Ascending aorta (tissue), 2 donors: ENCODE measurements at regions of chr3 and their contacts with region 1.

Region 1: DNA sequence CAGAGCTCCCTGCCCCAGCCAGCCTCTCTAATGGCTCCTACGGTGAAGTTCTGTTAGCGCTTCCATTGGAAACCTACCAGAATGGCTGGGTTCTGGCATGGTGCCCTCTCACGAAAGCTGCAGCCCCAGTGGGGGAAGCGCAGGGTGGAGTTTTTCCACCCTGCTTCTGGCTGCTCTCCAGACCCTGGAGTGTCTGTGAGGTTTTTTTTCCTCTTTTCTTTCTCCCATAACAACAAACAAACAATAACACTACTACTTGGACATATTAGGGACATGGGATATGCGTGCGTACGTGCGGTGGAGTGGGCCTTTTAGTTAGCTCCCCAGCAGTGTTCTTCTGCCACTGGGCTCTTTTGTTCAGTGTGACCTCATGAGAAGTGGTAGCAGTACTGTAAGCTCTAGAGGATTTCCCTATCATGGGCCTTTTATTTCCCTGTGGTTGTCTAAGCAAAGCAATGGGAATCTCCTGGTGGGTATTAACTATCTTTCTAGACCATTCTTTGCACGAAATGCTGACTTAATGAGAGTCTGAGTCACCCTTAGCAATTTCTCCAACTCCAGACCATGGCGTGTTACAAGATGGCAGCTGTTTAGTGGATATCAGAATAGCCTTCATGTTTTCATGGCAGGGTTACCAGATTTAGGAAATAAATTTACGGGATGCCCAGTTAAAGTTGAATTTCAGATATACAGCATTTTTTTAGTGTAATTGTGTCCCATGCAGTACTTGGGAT is 161.9 kb downstream of the FNDC3B start:
- DNase-seq: peak; percentile 12 to 72
- H3K4me3 ChIP-seq: no peak overlapping the region
- H3K27ac ChIP-seq: peak overlapping the region; percentile 75 to 88
- H3K4me1 ChIP-seq: peaks cover 11 to 46% of the 10 kb centered on the region in 2 donors
- H3K27me3 ChIP-seq: no peaks in the 10 kb centered on the region
- CTCF ChIP-seq: no peak

Region 2: GRCh38 chr3:171838218-171838761 is 363.0 kb before region 1 on chr3:
- intact Hi-C with region 1: no loop called
- DNase-seq: peak in 1 of 2 donors; percentile 69
- H3K4me3 ChIP-seq: peak overlapping the region; percentile 1 to 40
- H3K27ac ChIP-seq: peak overlapping the region; percentile 31 to 47
- H3K4me1 ChIP-seq: no peaks in the 10 kb centered on the region
- H3K27me3 ChIP-seq: no peaks in the 10 kb centered on the region
- CTCF ChIP-seq: no peak

Region 3: DNA sequence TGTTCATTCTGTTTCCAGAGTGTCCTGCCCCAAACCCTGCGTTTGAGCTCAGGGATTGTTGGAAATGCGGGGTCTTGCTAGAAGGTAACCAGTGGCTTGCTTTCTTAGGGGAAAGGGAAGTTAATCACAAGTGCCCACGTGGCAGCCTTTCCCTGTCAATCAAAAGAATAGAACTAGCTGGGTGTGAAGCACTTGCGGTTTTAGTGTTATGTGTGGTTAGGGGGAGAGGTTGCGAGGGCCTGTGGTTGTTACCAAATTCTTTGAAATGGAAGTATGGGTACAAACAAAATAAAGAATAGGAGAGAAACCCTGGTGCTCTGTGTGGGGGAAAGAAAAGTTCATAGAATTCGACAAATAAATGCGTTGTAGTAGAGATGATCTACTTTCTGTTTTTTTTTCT is 94.3 kb before region 1 on chr3:
- intact Hi-C with region 1: no loop called
- DNase-seq: no peak
- H3K4me3 ChIP-seq: no peak overlapping the region
- H3K27ac ChIP-seq: peak overlapping the region; percentile 8 to 19
- H3K4me1 ChIP-seq: peaks cover 9 to 45% of the 10 kb centered on the region in 2 donors
- H3K27me3 ChIP-seq: no peaks in the 10 kb centered on the region
- CTCF ChIP-seq: no peak

Region 4: DNA sequence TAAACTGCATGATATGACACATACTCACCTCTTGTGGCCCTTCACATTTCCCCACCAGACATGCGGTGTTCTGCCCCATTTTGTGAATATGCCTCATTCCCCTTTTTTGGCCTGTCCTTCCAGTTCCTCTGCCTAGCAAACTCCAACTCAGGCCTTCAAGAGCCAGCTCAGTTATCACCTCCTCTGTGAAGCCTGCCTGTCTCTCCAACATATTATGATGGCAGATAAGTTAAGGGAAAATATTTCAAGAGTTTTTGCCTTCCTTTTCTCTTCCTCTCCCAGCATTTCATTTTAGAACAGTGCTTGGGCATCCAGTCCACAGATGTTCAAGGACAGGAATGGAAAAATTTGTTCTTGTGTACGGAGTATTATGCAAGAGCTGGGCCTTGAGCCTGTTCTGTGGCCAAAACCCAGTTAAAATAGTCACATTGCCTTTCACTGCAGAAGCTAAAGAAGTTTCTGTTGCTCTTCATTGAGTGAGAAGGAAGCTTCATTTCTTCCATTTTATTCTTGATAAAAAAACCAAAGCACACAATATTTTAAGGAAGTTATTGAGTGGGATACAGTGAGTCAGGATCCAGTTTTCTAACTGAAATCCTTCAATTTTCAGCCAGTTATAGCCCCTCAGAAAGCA is 54.9 kb after region 1 on chr3:
- intact Hi-C with region 1: loop called (anchors 2 kb)
- DNase-seq: peak in 1 of 2 donors; percentile 83
- H3K4me3 ChIP-seq: no peak overlapping the region
- H3K27ac ChIP-seq: peak overlapping the region; percentile 89 to 91
- H3K4me1 ChIP-seq: peaks cover 25 to 54% of the 10 kb centered on the region in 2 donors
- H3K27me3 ChIP-seq: no peaks in the 10 kb centered on the region
- CTCF ChIP-seq: no peak

Region 5: DNA sequence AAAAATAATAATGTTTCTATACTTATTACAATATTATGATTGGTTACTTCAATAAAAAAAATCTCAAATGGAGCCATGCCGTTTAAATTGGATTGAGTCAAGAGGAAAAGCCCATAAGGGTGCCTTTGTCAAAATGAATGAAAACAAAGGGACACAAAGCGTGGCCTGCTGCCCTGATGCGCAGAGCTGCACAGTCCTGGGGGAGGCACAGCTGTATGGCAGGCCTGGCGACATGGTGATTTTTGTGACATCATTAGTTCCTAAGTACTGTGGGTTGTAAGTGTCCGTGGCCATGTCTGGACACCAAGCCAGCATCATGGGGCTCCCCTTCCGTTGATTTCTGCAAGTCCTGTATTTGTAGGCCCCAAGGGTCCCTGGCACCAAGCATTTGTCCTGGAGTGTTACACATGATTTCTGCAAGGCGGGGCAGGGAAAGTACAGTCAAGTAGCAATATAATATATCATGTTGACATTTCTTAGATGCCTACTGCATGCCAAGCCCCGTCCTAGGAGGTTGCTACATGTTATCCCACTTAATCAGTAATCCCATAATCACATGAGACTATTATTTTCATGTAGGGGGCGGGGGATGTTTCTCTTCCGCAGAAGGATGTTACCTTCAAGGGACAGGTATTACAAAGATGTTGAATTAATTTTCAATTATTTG is 187.2 kb after region 1 on chr3:
- intact Hi-C with region 1: no loop called
- DNase-seq: no peak
- H3K4me3 ChIP-seq: no peak overlapping the region
- H3K27ac ChIP-seq: no peak overlapping the region
- H3K4me1 ChIP-seq: peaks cover 0 to 17% of the 10 kb centered on the region in 2 donors
- H3K27me3 ChIP-seq: no peaks in the 10 kb centered on the region
- CTCF ChIP-seq: no peak